ENCODE measurements at regions of chr17 and their contacts with region 1.

Region 1: DNA sequence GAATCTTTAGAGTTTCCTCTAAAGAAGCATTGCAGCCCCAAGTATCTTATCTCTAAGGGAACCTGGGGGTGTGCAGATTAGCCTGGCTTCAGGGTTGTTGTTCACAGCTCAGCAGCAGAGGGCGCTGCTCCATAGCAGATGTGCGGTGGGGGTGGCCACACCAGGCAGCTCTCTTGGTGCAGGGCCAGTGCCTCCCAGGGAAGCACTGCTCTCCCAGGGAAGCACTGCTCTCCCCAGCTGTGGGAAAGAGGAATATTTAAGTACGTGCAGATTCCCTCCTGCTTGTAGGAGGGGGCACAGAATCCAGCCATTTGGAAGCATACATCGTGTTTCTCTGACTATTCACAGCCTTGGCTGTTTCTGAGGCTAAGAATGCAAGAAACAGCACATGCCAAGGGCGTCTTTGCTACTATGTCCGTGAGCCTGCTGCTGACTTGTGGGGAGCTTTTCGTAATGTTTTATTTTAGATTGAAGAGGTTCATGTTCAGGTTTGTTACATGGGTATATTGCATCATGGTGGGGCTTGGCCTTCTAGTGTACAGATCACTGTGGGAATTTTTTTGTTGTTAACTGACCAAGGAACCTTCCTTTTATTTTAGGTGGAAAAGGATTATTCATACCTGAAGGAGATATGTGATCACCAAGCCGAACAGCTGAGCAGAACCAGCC is 217.8 kb downstream of the SPECC1 start:
- DNase-seq: peak; percentile 90
- H3K4me3 ChIP-seq: no peak overlapping the region
- H3K27ac ChIP-seq: peak overlapping the region in 1 of 4 donors; percentile 48
- H3K4me1 ChIP-seq: peaks cover 0 to 20% (median 8%) of the 10 kb centered on the region in 4 donors
- H3K27me3 ChIP-seq: no peaks in the 10 kb centered on the region
- CTCF ChIP-seq: peak; percentile 78 to 95 (median 87)
- EP300 ChIP-seq: no peak
- POLR2A ChIP-seq: no peak

Region 2: DNA sequence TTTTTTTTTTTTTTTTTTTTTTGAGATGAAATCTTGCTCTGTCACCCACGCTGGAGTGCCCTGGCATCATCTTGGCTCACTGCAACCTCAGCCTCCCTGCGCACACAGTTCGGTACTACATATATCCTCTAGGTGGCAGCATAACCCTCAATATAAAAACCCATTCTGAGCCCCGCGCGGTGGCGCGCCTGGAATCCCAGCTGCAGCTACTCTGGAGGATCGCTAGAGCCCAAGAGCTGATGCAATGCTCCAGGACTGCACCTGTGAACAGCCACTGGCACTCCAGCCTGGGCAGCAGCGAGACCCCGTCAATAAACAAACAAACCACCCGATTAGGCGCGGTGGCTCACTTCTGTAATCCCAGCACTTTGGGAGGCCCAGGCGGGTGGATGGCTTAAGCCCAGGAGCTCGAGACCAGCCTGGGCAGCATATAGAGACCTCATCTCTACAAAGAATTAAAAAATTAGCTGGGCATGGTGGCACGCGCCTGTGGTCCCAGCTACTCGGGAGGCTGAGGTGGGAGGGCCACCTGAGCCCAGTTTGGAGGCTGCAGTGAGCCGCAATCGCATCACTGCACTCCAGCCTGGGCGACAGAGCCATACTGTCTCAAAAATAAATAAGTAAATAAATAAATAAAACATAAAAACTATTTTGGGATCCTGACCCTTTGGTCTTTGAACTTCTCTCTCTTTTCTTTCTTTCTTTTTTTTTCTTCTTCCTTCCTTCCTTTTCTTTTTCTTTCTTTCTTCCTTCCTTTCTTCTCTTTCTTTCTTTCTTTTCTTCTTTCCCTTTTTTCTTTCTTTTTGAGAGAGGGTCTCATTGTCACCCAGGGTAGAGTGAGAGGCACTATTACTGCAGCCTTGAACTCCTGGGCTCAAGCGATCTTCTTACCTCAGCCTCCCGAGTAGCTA is 233.9 kb before region 1 on chr17:
- intact Hi-C with region 1: loop called (anchors 5 kb)
- DNase-seq: peak; percentile 93
- H3K4me3 ChIP-seq: no peak overlapping the region
- H3K27ac ChIP-seq: no peak overlapping the region
- H3K4me1 ChIP-seq: peaks cover 0 to 5% (median 0%) of the 10 kb centered on the region in 4 donors
- H3K27me3 ChIP-seq: no peaks in the 10 kb centered on the region
- CTCF ChIP-seq: peak; percentile 48 to 66 (median 61)
- EP300 ChIP-seq: no peak
- POLR2A ChIP-seq: no peak

Region 3: DNA sequence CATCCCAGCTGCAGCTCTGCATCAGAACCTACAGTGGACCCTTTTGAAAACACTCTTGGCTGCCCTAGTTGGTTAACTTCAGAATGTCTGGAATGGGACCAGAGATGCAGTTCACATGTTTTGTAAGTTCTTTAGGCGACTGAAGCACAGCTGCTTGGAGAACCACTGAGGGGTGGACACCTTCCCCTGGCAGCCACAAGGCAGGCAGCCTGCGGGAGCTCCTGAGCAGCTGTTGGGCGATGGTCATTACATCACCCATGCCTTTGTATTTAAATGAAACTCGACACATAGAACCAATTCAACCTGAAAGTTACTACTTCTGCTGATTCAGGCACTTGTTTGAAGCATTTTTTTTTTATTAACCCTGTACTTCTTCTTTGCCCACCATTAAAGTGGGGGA is 88.9 kb after region 1 on chr17:
- intact Hi-C with region 1: loop called (anchors 1 kb)
- DNase-seq: no peak
- H3K4me3 ChIP-seq: no peak overlapping the region
- H3K27ac ChIP-seq: no peak overlapping the region
- H3K4me1 ChIP-seq: peaks cover 0 to 7% (median 4%) of the 10 kb centered on the region in 4 donors
- H3K27me3 ChIP-seq: no peaks in the 10 kb centered on the region
- CTCF ChIP-seq: no peak
- EP300 ChIP-seq: no peak
- POLR2A ChIP-seq: no peak